Adrenal gland (tissue), 19 donors: ENCODE measurements at regions of chr10 and their contacts with region 1.

Region 1: DNA sequence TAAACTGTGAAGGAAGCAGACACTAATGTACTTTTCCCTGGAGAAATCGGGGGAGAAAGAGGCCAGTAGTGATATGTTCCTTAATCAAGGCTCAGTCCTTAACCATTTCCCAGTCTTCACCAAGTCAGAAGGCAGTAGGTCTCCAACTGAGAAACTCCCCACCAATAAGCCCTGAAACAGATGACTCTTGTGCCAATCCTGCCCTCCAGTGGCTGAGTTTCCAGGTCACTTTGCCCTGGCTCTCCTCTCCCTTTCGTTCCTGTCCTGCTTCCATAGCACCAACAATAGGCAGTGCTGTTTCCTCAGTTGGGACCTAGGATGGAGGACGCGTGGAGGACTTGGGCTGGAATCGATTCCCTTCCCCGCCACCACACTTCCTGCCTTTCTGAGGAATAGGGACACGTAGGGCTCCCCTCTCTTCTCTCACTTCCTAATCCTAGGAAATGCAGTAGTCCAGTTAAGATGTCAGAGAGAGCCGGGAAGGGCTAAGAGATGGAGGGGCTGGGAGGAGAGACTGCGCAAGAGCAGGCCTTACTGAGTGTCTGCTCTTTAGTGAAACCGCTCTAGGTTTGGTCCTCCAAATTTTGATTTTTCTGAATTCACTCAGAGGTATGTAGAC is 23.4 kb downstream of the ATOH7 start:
- DNase-seq: peak; percentile 66 to 83 (median 77)
- H3K4me3 ChIP-seq: no peak overlapping the region
- H3K27ac ChIP-seq: no peak overlapping the region
- H3K4me1 ChIP-seq: no peaks in the 10 kb centered on the region
- H3K27me3 ChIP-seq: no peaks in the 10 kb centered on the region
- CTCF ChIP-seq: peak; percentile 42 to 82 (median 64)
- POLR2A ChIP-seq: no peak

Region 2: GRCh38 chr10:67849331-67850011 is 359.1 kb before region 1 on chr10:
- intact Hi-C with region 1: loop called in 1 of 2 experiments (anchors 10 kb)
- DNase-seq: peak; percentile 97 to 99 (median 97)
- H3K4me3 ChIP-seq: peak overlapping the region; percentile 51 to 98 (median 77)
- H3K27ac ChIP-seq: peak overlapping the region; percentile 91 to 100 (median 95)
- H3K4me1 ChIP-seq: peaks cover 5 to 8% of the 10 kb centered on the region in 2 donors
- H3K27me3 ChIP-seq: no peaks in the 10 kb centered on the region
- CTCF ChIP-seq: peak in 4 of 6 experiments; percentile 15 to 40 (median 30)
- POLR2A ChIP-seq: peak; percentile 53 to 76

Region 3: GRCh38 chr10:68067029-68067428 is 141.5 kb before region 1 on chr10:
- intact Hi-C with region 1: no loop called
- DNase-seq: no peak
- H3K4me3 ChIP-seq: no peak overlapping the region
- H3K27ac ChIP-seq: no peak overlapping the region
- H3K4me1 ChIP-seq: peaks cover 2 to 19% of the 10 kb centered on the region in 2 donors
- H3K27me3 ChIP-seq: no peaks in the 10 kb centered on the region
- CTCF ChIP-seq: no peak
- POLR2A ChIP-seq: no peak

Region 4: DNA sequence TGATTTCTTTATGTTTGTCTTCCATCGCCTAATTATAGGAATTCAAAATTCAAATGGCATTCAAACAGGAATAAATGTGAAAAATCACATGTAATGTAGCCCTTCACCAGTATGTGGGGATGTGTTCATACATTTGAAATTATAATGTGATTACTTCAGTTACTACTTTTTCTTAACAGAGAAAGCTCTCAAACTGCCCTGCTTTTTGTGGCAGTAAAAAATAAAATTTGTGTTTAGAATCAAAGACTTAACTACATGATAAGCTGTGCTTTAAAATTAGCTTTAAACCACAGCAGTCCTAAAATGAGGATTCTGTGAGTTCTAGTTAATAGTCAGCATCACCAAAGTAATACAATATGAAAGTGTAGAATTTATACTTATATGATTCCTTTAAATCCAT is 125.7 kb before region 1 on chr10:
- intact Hi-C with region 1: loop called in 1 of 2 experiments (anchors 5 kb)
- DNase-seq: no peak
- H3K4me3 ChIP-seq: no peak overlapping the region
- H3K27ac ChIP-seq: no peak overlapping the region
- H3K4me1 ChIP-seq: no peaks in the 10 kb centered on the region
- H3K27me3 ChIP-seq: no peaks in the 10 kb centered on the region
- CTCF ChIP-seq: peak; percentile 28 to 78 (median 64)
- POLR2A ChIP-seq: no peak

Region 5: DNA sequence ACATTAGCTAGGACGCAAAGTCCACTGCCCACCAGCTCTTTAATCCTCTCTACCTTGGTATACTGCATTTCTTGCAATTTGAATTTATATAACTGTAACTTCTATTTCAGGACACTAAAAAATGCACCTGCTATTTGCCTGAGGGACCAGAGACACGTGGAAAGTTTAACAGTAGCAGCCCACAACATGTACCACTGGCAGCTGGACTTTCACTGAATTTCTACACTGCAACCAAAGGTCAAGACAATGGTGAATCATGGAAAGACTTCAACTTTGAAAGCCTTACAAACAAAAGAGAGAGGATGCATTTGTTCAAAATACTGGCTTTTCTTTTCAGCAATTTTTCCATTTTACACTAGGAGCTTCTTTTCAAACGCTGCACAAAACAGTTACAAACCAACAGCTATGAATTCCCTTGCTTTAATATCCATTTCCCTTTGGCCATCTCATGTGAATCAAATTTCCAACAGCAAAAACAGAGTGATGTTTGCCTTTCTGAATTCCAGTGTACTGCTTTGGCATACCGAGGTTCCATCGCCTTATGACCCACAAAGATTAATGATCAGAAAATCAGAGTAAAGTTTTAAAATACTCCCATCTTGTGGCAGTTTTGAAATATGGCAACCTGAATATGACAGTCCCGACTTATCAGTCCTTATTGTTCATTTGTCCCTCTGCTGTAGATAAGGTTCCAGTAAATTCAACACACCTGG is 93.4 kb after region 1 on chr10:
- intact Hi-C with region 1: loop called in 1 of 2 experiments (anchors 10 kb)
- DNase-seq: peak in 1 of 7 donors; percentile 20
- H3K4me3 ChIP-seq: no peak overlapping the region
- H3K27ac ChIP-seq: no peak overlapping the region
- H3K4me1 ChIP-seq: peaks cover 0 to 5% of the 10 kb centered on the region in 2 donors
- H3K27me3 ChIP-seq: no peaks in the 10 kb centered on the region
- CTCF ChIP-seq: peak; percentile 43 to 68 (median 59)
- POLR2A ChIP-seq: no peak

Region 6: GRCh38 chr10:68348265-68348741 is 139.8 kb after region 1 on chr10:
- intact Hi-C with region 1: loop called in 1 of 2 experiments (anchors 5 kb)
- DNase-seq: peak in 6 of 7 donors; percentile 17 to 69 (median 42)
- H3K4me3 ChIP-seq: no peak overlapping the region
- H3K27ac ChIP-seq: no peak overlapping the region
- H3K4me1 ChIP-seq: peaks cover 0 to 6% of the 10 kb centered on the region in 2 donors
- H3K27me3 ChIP-seq: no peaks in the 10 kb centered on the region
- CTCF ChIP-seq: peak; percentile 33 to 63 (median 56)
- POLR2A ChIP-seq: no peak

Region 7: DNA sequence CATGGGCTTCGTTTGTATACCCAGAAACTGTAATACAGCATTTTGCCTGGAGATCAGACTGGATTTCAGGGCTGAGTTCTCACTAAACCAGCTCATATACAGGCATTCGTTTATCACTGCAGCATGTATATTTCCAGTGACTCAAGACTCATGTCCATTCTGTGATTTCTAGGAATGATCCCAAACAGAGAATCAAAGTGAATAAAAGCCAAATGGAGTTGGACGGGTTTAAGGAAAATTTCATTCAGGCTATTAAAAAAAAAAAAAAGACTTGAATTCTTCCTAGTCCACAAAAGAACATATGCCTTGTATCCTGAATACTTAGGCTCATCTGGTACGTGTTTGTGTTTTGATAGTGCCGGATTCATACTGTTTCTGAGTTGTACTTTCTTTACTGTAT is 398.4 kb after region 1 on chr10:
- intact Hi-C with region 1: no loop called
- DNase-seq: no peak
- H3K4me3 ChIP-seq: no peak overlapping the region
- H3K27ac ChIP-seq: no peak overlapping the region
- H3K4me1 ChIP-seq: peaks cover 2 to 3% of the 10 kb centered on the region in 2 donors
- H3K27me3 ChIP-seq: no peaks in the 10 kb centered on the region
- CTCF ChIP-seq: no peak
- POLR2A ChIP-seq: no peak